ENCODE measurements at regions of chr10 and their contacts with region 1.

Region 1: DNA sequence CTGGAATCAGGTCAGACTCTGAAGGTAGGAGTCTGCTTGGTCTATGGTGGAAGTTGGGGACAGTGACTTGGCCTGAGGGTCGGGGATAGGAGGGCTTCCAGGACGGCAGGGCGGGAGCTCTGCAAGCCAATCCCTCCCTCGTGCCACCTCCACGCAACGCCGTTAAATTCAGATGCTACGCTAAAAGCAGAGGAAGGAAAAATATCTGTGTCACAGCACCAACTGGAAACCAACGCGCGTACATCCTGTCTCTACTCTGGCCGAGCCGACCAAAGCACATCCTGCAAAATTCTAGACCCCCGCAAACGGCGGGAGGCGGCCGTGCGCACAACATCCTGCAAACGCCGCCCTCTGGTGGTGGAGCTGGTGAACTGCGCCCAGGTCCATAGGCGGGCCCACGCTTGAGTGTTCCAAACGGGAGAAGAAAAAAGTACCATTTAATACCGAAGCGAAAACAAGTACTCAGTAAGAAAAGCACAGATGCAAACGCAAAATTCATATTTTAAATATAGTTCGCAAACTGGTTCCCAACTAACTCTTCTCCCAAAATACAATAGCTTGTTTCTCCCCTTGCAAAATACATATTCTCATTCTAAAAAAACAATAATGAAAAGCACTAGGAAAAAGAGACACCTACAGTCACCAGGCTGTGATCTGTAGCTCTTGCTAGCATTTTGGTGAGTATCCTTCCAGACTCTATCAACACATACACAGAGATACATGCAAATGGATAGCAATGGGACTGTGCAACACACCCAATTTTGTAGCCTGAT is 45.7 kb upstream of the HSPA12A start:
- DNase-seq: peak; percentile 23
- H3K4me3 ChIP-seq: peak overlapping the region in 2 of 3 experiments; percentile 15 to 28
- H3K27ac ChIP-seq: no peak overlapping the region
- H3K4me1 ChIP-seq: peaks cover 8% of the 10 kb centered on the region
- H3K27me3 ChIP-seq: no peaks in the 10 kb centered on the region
- CTCF ChIP-seq: peak; percentile 91 to 97

Region 2: DNA sequence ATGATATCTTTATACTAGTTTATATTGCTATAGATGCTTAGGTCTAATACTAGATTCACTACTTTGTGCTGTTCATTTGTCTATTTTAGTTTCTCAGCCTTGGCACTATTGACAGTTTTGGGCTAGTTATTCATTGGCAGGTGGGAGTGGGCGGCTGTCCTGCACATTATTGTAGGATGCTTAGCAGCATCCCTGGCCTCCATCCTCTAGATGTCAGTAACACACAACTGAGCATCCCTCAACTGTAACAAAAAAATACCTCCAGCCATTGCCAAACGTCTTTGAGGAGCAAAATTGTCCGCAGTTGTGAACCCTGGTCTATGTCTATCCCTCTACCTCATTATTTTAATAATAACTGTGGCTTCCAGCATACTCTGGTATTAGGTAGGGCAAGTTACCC is 276.7 kb before region 1 on chr10:
- CTCF ChIA-PET with region 1: no interaction called
- dilution Hi-C with region 1: no loop called
- in situ Hi-C with region 1: no loop called
- intact Hi-C with region 1: loop called (anchors 1 kb)
- DNase-seq: no peak
- H3K4me3 ChIP-seq: no peak overlapping the region
- H3K27ac ChIP-seq: no peak overlapping the region
- H3K4me1 ChIP-seq: no peaks in the 10 kb centered on the region
- H3K27me3 ChIP-seq: no peaks in the 10 kb centered on the region
- CTCF ChIP-seq: peak in 1 of 2 donors; percentile 22

Region 3: DNA sequence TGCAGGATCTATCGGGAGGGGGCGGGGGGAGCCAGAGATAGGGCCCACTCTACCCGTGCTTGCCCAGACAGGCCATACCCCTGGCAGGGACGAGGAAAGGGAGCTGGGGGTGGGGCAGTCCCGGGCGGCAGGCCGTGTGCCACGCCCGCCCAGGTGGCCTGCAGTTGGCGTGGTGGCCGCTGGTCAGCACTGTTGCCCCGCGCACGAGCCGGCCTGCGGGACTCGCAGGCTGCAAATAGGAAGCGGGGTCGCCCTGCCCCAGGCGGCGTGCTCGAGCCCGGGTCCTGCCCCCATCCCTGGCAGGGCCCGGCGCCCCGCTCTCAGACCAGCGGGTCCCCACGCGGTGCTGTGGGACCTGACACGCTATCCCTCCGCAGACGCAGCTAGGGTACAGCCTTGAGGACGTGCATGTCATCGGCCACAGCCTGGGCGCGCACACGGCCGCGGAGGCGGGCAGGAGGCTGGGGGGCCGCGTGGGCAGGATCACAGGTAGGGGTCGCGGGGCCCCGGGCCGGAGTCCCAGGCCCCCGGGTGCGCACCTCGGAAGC is 160.6 kb before region 1 on chr10:
- CTCF ChIA-PET with region 1: no interaction called
- dilution Hi-C with region 1: no loop called
- in situ Hi-C with region 1: no loop called
- intact Hi-C with region 1: loop called (anchors 1 kb)
- DNase-seq: peak; percentile 23
- H3K4me3 ChIP-seq: peak overlapping the region; percentile 13 to 39 (median 34)
- H3K27ac ChIP-seq: no peak overlapping the region
- H3K4me1 ChIP-seq: peaks cover 7% of the 10 kb centered on the region
- H3K27me3 ChIP-seq: no peaks in the 10 kb centered on the region
- CTCF ChIP-seq: peak; percentile 37 to 65

Measured in mammary epithelial cell (primary cell).